HEK293 (cell line): ENCODE measurements at regions of chr1 and their contacts with region 1.

Region 1: DNA sequence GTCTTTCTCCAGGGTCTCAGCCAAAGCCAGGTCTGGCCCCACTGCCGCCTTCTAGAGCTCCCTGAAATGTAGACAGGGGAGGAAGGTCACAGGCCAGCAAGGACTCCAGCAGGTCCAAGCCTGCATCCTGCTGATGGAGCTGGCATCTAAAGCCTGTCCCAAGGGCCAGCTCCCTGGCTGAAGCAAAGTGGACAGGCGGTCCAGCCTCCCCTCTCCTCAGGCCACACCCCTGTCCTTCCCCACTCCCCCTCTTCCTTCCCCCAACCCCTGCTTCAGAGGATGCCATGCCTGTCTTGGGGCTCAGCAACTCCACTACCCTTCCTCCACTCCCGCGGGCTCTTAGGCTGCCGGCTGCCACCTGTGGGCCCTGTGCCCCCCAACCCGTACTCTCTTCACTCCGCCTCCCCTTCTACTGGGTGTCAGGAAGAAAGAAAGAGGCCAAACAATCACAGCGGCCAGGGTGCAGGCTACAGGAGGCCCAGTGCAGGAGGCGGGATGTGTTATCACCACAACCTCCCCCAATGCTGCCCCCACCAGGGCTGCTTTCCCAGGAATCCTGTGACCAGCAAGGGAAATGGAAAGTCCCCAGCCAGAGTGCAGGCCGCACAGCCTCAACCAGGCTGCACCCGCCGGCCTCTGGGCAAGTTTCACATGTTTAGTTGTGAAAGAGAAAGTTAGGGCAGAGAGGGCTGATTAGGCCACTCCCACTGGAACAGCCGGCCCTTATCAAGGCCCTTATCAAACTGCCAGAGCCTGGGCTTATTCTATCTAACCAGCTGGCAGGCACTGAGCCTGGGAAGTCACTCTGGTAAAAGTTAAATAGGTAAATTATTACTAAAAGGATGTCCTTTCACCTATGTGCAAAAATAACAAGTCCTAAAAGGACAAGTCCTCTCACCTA is 34.1 kb downstream of the ACOT7 start:
- H3K4me3 ChIP-seq: no peak overlapping the region
- H3K27ac ChIP-seq: 0 out of 2 replicates have a peak overlapping the region, but pooled peaks have one; percentile 34
- H3K4me1 ChIP-seq: peaks cover 8% of the 10 kb centered on the region; the same call in 1 of the 2 replicates
- CTCF ChIP-seq: peak; percentile 24; the same call in 1 of the 2 replicates

Region 2: DNA sequence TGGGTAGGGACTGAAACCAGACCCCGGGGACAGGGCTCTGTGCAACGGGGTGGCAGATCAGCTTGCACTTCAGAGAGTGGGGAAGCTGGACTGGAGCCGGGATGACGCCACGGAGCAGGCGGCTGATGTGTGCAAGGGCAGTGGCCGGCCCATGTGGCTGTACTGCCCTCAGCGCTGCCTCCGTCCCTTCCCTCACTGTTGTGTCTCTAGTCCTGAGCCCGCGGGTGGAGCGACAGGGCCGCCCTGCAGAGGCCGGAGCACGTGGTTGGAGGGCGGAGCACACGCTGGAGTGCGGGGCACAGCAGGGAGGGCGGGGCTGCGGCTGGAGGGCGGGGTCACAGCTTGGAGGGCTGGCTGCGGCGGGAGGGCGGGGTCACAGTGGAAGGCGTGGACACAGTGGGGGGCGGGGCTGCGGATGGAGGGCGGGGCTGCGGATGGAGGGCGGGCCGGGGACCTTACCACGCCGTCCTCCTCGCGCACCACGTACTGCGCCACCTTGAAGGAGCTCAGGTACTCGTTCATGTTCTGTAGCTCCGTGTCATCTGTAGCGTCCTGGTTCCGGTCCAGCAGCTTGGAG is 231.8 kb before region 1 on chr1:
- CTCF ChIA-PET with region 1: no interaction called
- POLR2A ChIA-PET with region 1: no interaction called
- H3K4me3 ChIP-seq: no peak overlapping the region
- H3K27ac ChIP-seq: no peak overlapping the region
- H3K4me1 ChIP-seq: no peaks in the 10 kb centered on the region
- CTCF ChIP-seq: no peak

Region 3: DNA sequence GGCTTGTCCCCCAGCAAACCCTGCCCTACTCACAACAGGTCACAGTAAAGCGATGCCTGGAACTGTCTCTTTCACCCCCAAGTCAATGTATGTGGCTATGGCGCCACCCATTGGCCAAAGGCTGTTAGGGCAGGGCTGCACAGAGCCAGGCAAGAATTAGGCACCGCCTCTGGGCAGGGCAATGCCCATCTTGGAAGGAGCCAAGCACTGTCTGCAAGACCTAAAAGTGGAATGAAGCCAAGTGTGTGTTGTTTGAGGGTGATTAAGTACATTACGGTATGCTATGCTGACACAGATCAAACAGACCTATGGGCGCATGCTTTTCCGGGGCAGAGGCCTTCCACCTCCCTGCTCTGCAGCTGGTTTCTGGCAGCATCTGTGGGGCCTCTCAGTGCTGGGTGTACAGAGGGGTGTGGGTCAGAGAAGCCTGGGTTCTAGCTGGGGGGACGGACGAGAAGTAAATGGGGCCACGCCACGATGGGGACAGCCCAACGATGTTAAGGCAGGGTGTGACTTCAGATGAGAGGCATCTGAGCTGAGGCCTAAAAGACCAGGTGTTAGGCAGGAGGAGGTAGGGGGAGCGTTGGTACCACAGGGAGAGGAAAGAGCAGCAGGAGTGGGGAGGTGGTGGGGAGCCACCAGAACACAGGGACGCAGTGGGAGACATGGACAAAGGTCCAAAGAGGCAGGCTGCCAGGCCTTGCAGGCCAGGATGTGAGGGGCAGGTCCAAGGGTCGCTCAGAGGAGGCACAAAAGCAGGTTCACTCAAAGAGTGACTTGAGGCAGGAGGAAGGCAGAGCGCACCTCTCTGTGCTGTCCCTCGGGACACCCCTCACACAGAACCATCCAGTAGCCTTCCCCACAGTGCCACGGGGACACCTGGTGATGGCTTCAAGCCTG is 15.7 kb before region 1 on chr1:
- CTCF ChIA-PET with region 1: interaction called, 22 read pairs
- POLR2A ChIA-PET with region 1: no interaction called
- H3K4me3 ChIP-seq: no peak overlapping the region
- H3K27ac ChIP-seq: no peak overlapping the region
- H3K4me1 ChIP-seq: no peaks in the 10 kb centered on the region
- CTCF ChIP-seq: peak; percentile 93

Region 4: GRCh38 chr1:6378096-6378746 is 18.8 kb after region 1 on chr1:
- CTCF ChIA-PET with region 1: interaction called, 20 read pairs
- POLR2A ChIA-PET with region 1: no interaction called
- H3K4me3 ChIP-seq: no peak overlapping the region
- H3K27ac ChIP-seq: 0 out of 2 replicates have a peak overlapping the region, but pooled peaks have one; percentile 17
- H3K4me1 ChIP-seq: no peaks in the 10 kb centered on the region
- CTCF ChIP-seq: peak; percentile 32; the same call in 1 of the 2 replicates

Region 5: GRCh38 chr1:6393400-6394187 is 34.1 kb after region 1 on chr1 and contains the start of gene ACOT7:
- CTCF ChIA-PET with region 1: interaction called, 77 read pairs
- POLR2A ChIA-PET with region 1: interaction called, 5 read pairs
- H3K4me3 ChIP-seq: peak within 1 kb of the TSS; percentile 75
- H3K27ac ChIP-seq: peak within 1 kb of the TSS; percentile 90
- H3K4me1 ChIP-seq: peaks cover 8% of the 10 kb centered on the region; the same call in 1 of the 2 replicates
- CTCF ChIP-seq: peak; percentile 39

Region 6: GRCh38 chr1:6401673-6402072 is 42.2 kb after region 1 on chr1:
- CTCF ChIA-PET with region 1: interaction called, 77 read pairs
- POLR2A ChIA-PET with region 1: no interaction called
- H3K4me3 ChIP-seq: no peak overlapping the region
- H3K27ac ChIP-seq: no peak overlapping the region
- H3K4me1 ChIP-seq: no peaks in the 10 kb centered on the region
- CTCF ChIP-seq: no peak

Region 7: GRCh38 chr1:6414443-6414844 is 55.0 kb after region 1 on chr1:
- CTCF ChIA-PET with region 1: interaction called, 23 read pairs
- POLR2A ChIA-PET with region 1: no interaction called
- H3K4me3 ChIP-seq: no peak overlapping the region
- H3K27ac ChIP-seq: peak overlapping the region; percentile 26; the same call in 1 of the 2 replicates
- H3K4me1 ChIP-seq: no peaks in the 10 kb centered on the region; the same call in 1 of the 2 replicates
- CTCF ChIP-seq: peak; percentile 84

Region 8: DNA sequence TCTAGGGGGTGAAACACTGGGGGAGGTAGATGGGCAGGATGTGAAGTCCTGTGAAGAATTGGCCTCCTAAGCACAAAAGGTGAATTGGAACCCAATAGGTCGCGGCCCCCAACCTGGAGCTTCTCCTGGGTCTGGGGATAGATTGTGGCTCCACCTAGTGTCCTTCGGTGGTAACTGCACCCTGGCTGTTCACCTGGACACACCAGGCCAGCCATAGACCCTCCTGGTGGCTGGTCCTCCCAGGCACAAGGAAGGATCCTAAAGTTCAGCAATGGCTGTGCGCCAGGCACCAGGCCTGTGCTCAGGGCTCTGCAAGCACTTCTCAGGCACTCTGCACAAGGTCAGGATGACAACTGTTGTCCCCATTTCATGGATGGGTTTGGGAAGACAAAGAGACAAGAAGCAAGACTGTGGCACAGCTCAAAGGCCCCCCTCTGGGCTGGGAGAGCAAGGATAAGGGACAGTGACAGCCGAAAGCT is 78.6 kb after region 1 on chr1:
- CTCF ChIA-PET with region 1: interaction called, 17 read pairs
- POLR2A ChIA-PET with region 1: no interaction called
- H3K4me3 ChIP-seq: no peak overlapping the region
- H3K27ac ChIP-seq: no peak overlapping the region
- H3K4me1 ChIP-seq: no peaks in the 10 kb centered on the region
- CTCF ChIP-seq: peak; percentile 77